CD8-positive, alpha-beta T cell (primary cell): ENCODE measurements at regions of chr22 and their contacts with region 1.

Region 1: GRCh38 chr22:31089160-31090100 is 8.3 kb downstream of the SMTN start:
- DNase-seq: peak in 5 of 9 experiments; percentile 39 to 64 (median 54)
- ATAC-seq: no peak
- H3K4me3 ChIP-seq: no peak overlapping the region
- H3K4me3 Mint-ChIP-seq: no peak overlapping the region
- H3K27ac ChIP-seq: no peak overlapping the region
- H3K27ac Mint-ChIP-seq: no peak overlapping the region
- H3K4me1 ChIP-seq: peaks cover under 1% of the 10 kb centered on the region
- H3K4me1 Mint-ChIP-seq: peaks cover under 1% of the 10 kb centered on the region
- H3K27me3 ChIP-seq: no peaks in the 10 kb centered on the region
- H3K27me3 Mint-ChIP-seq: no peaks in the 10 kb centered on the region
- CTCF ChIP-seq: peak; percentile 57

Region 2: DNA sequence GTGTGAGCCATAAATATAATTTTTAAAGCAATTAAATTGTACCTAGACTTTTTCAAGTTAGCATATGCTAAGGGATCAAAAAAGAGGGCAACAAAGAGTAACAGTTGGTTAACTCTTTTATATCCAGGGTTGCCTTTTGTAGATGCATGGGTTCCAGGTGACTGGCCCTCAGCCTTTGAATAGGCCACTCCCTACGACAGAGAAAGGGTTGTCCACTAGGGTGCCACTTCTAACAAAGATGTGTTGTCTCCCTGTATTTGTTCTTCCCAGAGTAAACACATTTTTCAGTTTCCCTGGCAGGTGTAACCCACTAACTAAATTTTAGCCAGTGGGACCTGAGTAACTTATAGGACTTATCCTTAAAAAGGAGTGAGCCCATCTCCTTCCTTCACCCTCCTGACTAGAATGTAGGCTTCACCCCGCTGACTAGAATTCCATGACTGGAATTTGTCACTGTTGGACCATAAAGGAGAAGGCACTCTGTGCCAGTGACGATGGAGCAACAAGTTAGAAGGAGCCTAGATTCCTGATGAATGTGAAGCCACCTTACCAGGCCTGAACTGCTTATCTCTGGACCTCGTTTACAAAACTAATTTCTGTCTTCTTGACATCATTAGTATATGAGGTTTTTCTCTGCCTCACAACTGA is 103.7 kb before region 1 on chr22:
- CTCF ChIA-PET with region 1: no interaction called
- POLR2A ChIA-PET with region 1: no interaction called
- intact Hi-C with region 1: no loop called
- DNase-seq: no peak
- ATAC-seq: no peak
- H3K4me3 ChIP-seq: no peak overlapping the region
- H3K4me3 Mint-ChIP-seq: no peak overlapping the region
- H3K27ac ChIP-seq: no peak overlapping the region
- H3K27ac Mint-ChIP-seq: no peak overlapping the region
- H3K4me1 ChIP-seq: no peaks in the 10 kb centered on the region
- H3K4me1 Mint-ChIP-seq: no peaks in the 10 kb centered on the region
- H3K27me3 ChIP-seq: peaks cover 0 to 2% of the 10 kb centered on the region in 2 experiments
- H3K27me3 Mint-ChIP-seq: no peaks in the 10 kb centered on the region
- CTCF ChIP-seq: no peak

Region 3: DNA sequence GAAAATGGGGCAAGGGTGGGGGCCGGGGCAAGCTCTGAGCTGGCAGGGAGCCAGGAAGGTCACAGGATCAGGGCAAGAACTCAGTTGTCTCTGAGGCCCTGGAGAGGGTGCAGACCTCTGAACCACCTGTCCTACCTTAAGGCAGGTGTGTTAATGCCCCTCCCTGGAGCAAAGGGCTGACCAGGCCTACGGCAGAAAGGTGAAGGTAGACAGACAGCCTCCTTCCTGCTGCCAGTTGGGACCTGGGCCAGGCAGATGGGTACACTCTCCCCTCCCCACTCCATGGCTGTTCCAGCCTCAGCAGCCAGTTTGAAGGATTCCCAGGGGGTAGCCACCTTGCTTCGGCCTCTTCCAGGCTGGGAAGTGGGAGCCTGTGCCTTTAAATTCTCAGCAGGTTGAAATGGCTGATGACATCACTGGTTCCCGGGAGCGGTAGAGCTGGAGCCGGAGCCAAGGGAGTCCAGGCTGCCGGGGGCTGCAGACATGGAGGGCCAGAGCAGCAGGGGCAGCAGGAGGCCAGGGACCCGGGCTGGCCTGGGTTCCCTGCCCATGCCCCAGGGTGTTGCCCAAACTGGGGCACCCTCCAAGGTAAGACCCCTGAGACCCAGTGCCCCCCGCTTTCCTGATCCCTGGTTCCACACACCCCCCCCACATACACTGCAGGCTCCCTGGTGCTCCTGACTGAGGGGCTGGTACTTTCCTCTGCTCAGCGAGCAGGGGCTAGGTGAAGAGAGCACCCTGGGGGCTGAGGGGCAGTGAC is 33.3 kb after region 1 on chr22 and contains the start of gene INPP5J:
- CTCF ChIA-PET with region 1: no interaction called
- POLR2A ChIA-PET with region 1: no interaction called
- intact Hi-C with region 1: no loop called
- DNase-seq: no peak
- ATAC-seq: no peak
- H3K4me3 ChIP-seq: no peak within 1 kb of the TSS
- H3K4me3 Mint-ChIP-seq: no peak within 1 kb of the TSS
- H3K27ac ChIP-seq: no peak within 1 kb of the TSS
- H3K27ac Mint-ChIP-seq: no peak within 1 kb of the TSS
- H3K4me1 ChIP-seq: no peaks in the 10 kb centered on the region
- H3K4me1 Mint-ChIP-seq: no peaks in the 10 kb centered on the region
- H3K27me3 ChIP-seq: no peaks in the 10 kb centered on the region
- H3K27me3 Mint-ChIP-seq: no peaks in the 10 kb centered on the region
- CTCF ChIP-seq: no peak
- total RNA-seq, gene INPP5J: 0.11 to 0.14 TPM

Region 4: GRCh38 chr22:31148953-31149627 is 59.7 kb after region 1 on chr22:
- CTCF ChIA-PET with region 1: interaction called, 6 read pairs
- POLR2A ChIA-PET with region 1: no interaction called
- intact Hi-C with region 1: loop called in 1 of 2 experiments (anchors 1 kb)
- DNase-seq: peak in 5 of 9 experiments; percentile 16 to 53 (median 40)
- ATAC-seq: peak; percentile 56
- H3K4me3 ChIP-seq: no peak overlapping the region
- H3K4me3 Mint-ChIP-seq: no peak overlapping the region
- H3K27ac ChIP-seq: no peak overlapping the region
- H3K27ac Mint-ChIP-seq: no peak overlapping the region
- H3K4me1 ChIP-seq: no peaks in the 10 kb centered on the region
- H3K4me1 Mint-ChIP-seq: no peaks in the 10 kb centered on the region
- H3K27me3 ChIP-seq: no peaks in the 10 kb centered on the region
- H3K27me3 Mint-ChIP-seq: peaks cover 3% of the 10 kb centered on the region
- CTCF ChIP-seq: no peak